ENCODE measurements at regions of chr10 and their contacts with region 1.

Region 1: DNA sequence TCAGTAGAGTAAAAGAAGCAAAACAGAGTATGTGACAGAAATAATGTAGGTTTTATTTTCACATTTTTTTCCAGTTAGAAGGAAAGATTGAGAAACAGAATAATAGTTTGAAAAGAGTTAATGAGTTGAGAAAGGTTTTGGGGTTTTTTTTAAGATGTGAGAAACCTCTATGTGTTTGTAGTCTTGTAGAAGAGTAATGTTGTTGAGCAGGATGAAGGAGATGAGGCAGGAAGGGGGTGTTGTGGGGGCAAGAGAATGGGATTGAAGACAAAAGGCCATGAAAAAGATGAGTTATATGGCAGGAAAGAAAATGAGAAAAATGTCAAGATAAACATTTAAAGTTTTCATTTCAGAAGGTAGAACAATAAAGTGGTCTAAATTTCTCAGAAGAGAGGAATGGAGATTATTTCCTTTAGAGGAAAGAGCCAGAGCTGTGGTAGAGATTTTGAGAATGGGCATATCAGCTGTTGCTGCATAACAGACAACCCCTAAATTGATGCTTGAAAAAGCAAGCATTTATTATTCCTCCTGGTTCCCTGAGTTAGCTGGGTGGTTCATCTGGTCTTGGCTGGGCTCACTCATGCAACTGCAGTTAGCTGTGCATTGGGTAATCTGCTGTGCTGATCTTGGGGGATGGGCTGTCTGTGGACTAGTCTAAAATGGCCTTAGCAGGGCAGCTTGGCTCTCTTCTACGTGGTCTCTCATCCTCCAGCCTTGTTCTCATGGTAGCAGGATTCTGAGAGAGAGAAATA is 27.1 kb downstream of the PCGF5 start:
- DNase-seq: no peak
- ATAC-seq: peak; percentile 72

Region 2: GRCh38 chr10:91006001-91006751 is 241.4 kb before region 1 on chr10:
- intact Hi-C with region 1: loop called (anchors 10 kb)
- DNase-seq: peak; percentile 77
- ATAC-seq: peak; percentile 98